Common myeloid progenitor, CD34-positive (primary cell): ENCODE measurements at regions of chr17 and their contacts with region 1.

Region 1: DNA sequence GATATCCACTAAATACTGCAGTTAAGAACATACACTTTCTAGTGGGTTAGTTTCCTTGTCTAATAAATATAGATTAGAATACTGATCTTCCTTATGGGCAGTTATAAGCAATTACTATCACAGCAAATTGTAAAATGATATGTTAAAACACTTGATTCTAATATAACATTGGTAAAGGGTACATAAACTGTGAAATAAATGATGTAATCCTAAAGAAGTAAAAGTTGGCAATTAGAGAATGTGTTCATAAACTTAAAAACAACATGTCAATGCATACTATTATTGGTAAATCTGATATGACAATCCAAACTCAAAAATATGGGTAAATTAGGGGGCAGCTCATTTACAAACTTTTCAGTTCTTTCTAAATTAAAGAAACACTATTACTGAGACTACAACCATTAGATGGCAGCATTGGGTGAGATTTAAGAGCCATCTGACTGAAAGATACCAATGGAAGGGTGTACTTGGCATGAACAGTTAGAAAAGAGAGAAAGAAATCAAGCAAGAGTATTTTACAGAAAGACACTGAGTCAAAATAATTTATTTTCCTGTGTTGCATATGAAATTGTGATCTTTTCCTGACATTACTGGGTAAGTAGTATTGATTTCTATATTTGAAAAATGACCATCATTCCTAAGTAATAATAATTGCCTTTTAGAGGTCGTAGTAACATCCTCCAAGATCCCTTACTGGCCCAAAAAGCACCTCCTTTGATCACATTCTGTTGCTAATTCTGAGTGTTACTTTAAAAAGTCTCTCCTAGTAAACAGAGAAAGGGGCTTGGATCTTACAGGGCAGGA is 119.6 kb downstream of the SPAG9 start:
- DNase-seq: peak; percentile 75 to 90 (median 86)
- H3K4me3 ChIP-seq: no peak overlapping the region
- H3K27ac ChIP-seq: no peak overlapping the region
- H3K4me1 ChIP-seq: no peaks in the 10 kb centered on the region
- H3K27me3 ChIP-seq: no peaks in the 10 kb centered on the region

Region 2: DNA sequence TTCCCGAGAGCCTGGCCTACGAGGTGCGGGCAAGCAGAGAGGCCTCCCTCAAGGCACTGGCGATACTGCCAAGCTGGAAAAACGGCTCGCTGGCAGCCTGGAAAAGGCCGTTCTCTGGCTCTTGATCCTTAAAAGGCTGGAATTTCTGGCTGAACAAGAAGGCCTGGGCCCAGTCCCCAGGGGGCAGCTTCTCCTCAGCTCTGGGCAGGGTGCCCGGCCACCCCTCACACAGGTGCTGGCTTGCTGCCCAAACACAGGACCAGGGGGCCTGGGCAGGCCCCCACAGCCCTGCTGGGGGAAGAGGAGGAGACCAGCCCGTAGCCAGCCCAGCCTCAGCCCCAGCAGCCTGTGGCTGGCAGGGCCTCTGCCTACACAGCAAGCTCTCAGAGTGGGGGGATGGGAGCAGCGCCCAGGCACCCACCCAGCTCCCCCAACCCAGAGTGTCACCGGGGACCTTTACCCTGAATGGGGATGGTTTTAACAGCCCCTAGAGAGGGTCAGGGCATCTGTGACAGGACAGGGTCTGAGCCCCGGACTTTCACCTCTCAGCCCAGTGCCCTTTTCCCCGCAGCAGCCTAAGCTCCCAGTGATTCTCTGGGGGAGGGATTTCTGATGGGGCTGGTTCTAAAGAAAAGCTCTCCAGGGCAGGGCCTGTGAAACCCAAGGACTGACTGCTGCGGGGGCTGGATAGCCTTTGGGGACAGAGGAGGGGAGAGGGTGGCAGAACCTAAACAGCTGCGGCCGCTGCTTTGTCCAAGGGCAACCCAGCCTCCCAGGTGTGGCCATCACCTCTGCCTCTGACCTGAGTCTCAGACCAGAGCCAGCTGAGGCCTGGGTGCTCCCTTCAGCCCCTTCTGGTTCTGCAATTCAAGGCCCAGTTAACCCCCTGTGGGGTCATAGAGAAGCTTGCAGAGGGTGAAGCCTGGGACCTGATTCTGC is 96.2 kb before region 1 on chr17:
- CTCF ChIA-PET with region 1: no interaction called
- POLR2A ChIA-PET with region 1: no interaction called
- DNase-seq: no peak
- H3K4me3 ChIP-seq: no peak overlapping the region
- H3K27ac ChIP-seq: no peak overlapping the region
- H3K4me1 ChIP-seq: peaks cover 0 to 24% (median 8%) of the 10 kb centered on the region in 4 experiments
- H3K27me3 ChIP-seq: no peaks in the 10 kb centered on the region

Region 3: GRCh38 chr17:51015145-51015558 is 14.1 kb after region 1 on chr17:
- CTCF ChIA-PET with region 1: interaction called, 29 read pairs
- POLR2A ChIA-PET with region 1: no interaction called
- DNase-seq: no peak
- H3K4me3 ChIP-seq: no peak overlapping the region
- H3K27ac ChIP-seq: no peak overlapping the region
- H3K4me1 ChIP-seq: peaks cover 0 to 14% (median 1%) of the 10 kb centered on the region in 4 experiments
- H3K27me3 ChIP-seq: no peaks in the 10 kb centered on the region

Region 4: GRCh38 chr17:51056813-51057510 is 55.9 kb after region 1 on chr17:
- CTCF ChIA-PET with region 1: interaction called, 128 read pairs
- POLR2A ChIA-PET with region 1: no interaction called
- DNase-seq: peak; percentile 68 to 84 (median 81)
- H3K4me3 ChIP-seq: no peak overlapping the region
- H3K27ac ChIP-seq: peak overlapping the region in 1 of 2 experiments; percentile 12
- H3K4me1 ChIP-seq: peaks cover 0 to 11% (median 4%) of the 10 kb centered on the region in 4 experiments
- H3K27me3 ChIP-seq: no peaks in the 10 kb centered on the region

Region 5: GRCh38 chr17:51153210-51154072 is 152.4 kb after region 1 on chr17 and contains the start of gene NME1:
- CTCF ChIA-PET with region 1: interaction called, 53 read pairs
- POLR2A ChIA-PET with region 1: interaction called, 4 read pairs
- DNase-seq: peak; percentile 100
- H3K4me3 ChIP-seq: peak within 1 kb of the TSS; percentile 74 to 99 (median 91)
- H3K27ac ChIP-seq: peak within 1 kb of the TSS in 1 of 2 experiments; percentile 84
- H3K4me1 ChIP-seq: peaks cover 7 to 23% (median 16%) of the 10 kb centered on the region in 4 experiments
- H3K27me3 ChIP-seq: no peaks in the 10 kb centered on the region

Region 6: GRCh38 chr17:51200295-51200694 is 199.3 kb after region 1 on chr17:
- CTCF ChIA-PET with region 1: no interaction called
- POLR2A ChIA-PET with region 1: no interaction called
- DNase-seq: peak; percentile 37 to 74 (median 59)
- H3K4me3 ChIP-seq: no peak overlapping the region
- H3K27ac ChIP-seq: peak overlapping the region; percentile 25 to 31
- H3K4me1 ChIP-seq: peaks cover 0 to 13% (median 0%) of the 10 kb centered on the region in 4 experiments
- H3K27me3 ChIP-seq: no peaks in the 10 kb centered on the region